Heart left ventricle (tissue), 16 donors: ENCODE measurements at regions of chr1 and their contacts with region 1.

Region 1: GRCh38 chr1:172429331-172430127 is 9.0 kb downstream of the C1orf105 start:
- DNase-seq: peak in 1 of 5 donors; percentile 13
- ATAC-seq: peak in 3 of 4 donors; percentile 45 to 54 (median 52)
- H3K4me3 ChIP-seq: no peak overlapping the region
- H3K27ac ChIP-seq: no peak overlapping the region
- H3K4me1 ChIP-seq: peaks cover 0 to 12% (median 0%) of the 10 kb centered on the region in 12 donors
- H3K27me3 ChIP-seq: no peaks in the 10 kb centered on the region
- CTCF ChIP-seq: peak; percentile 42 to 82 (median 67)
- POLR2A ChIP-seq: no peak

Region 2: GRCh38 chr1:172002725-172003345 is 426.7 kb before region 1 on chr1:
- intact Hi-C with region 1: loop called in 4 of 10 experiments (anchors 5 kb)
- DNase-seq: peak in 1 of 5 donors; percentile 14
- ATAC-seq: no peak
- H3K4me3 ChIP-seq: no peak overlapping the region
- H3K27ac ChIP-seq: no peak overlapping the region
- H3K4me1 ChIP-seq: no peaks in the 10 kb centered on the region
- H3K27me3 ChIP-seq: no peaks in the 10 kb centered on the region
- CTCF ChIP-seq: peak; percentile 41 to 79 (median 62)
- POLR2A ChIP-seq: no peak

Region 3: GRCh38 chr1:172487550-172487949 is 58.0 kb after region 1 on chr1:
- intact Hi-C with region 1: no loop called
- DNase-seq: no peak
- ATAC-seq: no peak
- H3K4me3 ChIP-seq: no peak overlapping the region
- H3K27ac ChIP-seq: no peak overlapping the region
- H3K4me1 ChIP-seq: peaks cover 0 to 11% (median 0%) of the 10 kb centered on the region in 12 donors
- H3K27me3 ChIP-seq: peaks cover 0 to 9% (median 0%) of the 10 kb centered on the region in 9 donors
- CTCF ChIP-seq: no peak
- POLR2A ChIP-seq: no peak